ENCODE measurements at regions of chr6 and their contacts with region 1.

Region 1: DNA sequence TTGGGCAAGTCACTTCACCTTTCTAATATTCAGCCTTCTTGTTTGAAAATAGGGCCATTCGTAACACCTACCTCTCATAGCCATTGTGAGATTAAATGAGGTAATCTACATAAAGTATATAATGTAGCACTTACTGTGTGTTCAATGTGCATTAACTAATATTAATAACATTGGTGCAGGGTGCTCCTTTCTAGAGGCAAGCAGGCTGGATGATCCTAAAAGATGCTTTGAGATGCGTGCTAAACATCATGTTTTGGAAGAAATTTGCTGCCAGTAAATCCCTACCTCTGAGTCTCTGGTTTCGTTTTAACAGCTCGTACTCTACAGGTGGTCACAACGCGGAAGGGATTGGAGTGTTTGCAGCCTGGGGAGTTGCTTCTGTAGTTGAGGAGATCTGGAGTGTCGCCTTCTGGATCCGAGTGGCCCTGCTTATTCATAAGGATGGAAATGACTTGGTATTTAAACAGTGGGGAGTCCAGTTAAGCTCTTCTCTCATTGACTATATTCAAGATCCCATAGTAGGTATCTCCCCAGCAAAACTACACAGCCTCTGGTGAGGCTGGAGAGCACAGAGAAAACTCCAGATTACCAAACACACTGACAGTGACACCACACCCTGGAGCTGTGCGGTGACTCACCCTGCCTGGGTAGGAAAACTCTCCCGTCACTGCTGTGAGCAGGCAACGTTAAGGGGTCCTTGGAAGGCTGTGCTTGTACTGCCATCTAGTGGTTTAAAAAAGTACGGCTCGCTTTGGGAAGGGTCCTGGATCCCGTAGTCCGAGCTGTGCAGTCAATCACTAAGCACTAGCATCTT is 107.9 kb downstream of the MAP3K7 start:
- DNase-seq: peak; percentile 94
- H3K4me3 Mint-ChIP-seq: no peak overlapping the region
- H3K27ac Mint-ChIP-seq: peak overlapping the region; percentile 81
- H3K4me1 Mint-ChIP-seq: peaks cover 60% of the 10 kb centered on the region
- H3K27me3 Mint-ChIP-seq: no peaks in the 10 kb centered on the region

Region 2: DNA sequence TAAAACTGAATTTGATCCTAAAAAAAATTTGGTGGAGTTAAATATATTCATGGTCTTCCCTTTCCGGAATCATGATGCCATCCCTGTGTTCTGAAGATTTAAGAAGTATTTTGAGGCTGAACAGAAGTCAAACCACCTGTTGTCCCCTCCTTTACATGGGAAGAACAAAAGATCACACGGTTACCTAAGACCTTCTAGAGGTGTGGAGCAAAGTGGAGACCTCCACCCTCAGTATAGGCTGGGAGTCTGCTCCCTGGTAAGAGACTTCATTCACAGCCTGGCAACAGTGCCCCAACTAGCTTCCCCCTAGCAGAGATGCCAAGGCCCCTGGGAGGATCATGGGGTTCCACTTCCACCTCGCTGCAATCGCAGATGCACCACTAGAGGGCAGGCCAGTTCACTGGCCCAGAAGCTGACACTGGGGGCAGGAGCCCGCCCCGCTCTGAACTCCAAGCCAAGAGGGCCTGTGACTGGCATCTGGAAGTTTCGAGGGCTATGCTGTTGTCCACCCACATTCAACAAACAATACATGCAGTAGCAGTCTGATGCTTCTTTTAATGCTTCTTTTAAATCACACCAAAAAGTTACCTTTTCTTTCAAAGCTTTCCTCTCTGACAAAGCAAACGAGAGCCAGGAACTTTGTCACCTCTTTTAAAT is 1107.0 kb before region 1 on chr6:
- CTCF ChIA-PET with region 1: no interaction called
- intact Hi-C with region 1: loop called (anchors 1 kb)
- DNase-seq: peak; percentile 81
- H3K4me3 Mint-ChIP-seq: no peak overlapping the region
- H3K27ac Mint-ChIP-seq: no peak overlapping the region
- H3K4me1 Mint-ChIP-seq: peaks cover 15% of the 10 kb centered on the region
- H3K27me3 Mint-ChIP-seq: no peaks in the 10 kb centered on the region

Region 3: GRCh38 chr6:89819336-89820130 is 659.5 kb before region 1 on chr6 and contains the start of gene MDN1:
- CTCF ChIA-PET with region 1: no interaction called
- intact Hi-C with region 1: loop called (anchors 2 kb)
- DNase-seq: peak; percentile 94
- H3K4me3 Mint-ChIP-seq: peak within 1 kb of the TSS; percentile 82
- H3K27ac Mint-ChIP-seq: peak within 1 kb of the TSS; percentile 88
- H3K4me1 Mint-ChIP-seq: peaks cover 36% of the 10 kb centered on the region
- H3K27me3 Mint-ChIP-seq: no peaks in the 10 kb centered on the region
- total RNA-seq, gene MDN1: 42.1 to 52.1 TPM

Region 4: GRCh38 chr6:89940225-89941027 is 538.6 kb before region 1 on chr6:
- CTCF ChIA-PET with region 1: interaction called, 20 read pairs
- intact Hi-C with region 1: loop called (anchors 1 kb)
- DNase-seq: peak; percentile 86
- H3K4me3 Mint-ChIP-seq: no peak overlapping the region
- H3K27ac Mint-ChIP-seq: peak overlapping the region; percentile 74
- H3K4me1 Mint-ChIP-seq: peaks cover 70% of the 10 kb centered on the region
- H3K27me3 Mint-ChIP-seq: no peaks in the 10 kb centered on the region

Region 5: GRCh38 chr6:90216072-90216977 is 262.7 kb before region 1 on chr6:
- CTCF ChIA-PET with region 1: interaction called, 9 read pairs
- intact Hi-C with region 1: loop called (anchors 1 kb)
- DNase-seq: peak; percentile 76
- H3K4me3 Mint-ChIP-seq: peak overlapping the region; percentile 14
- H3K27ac Mint-ChIP-seq: no peak overlapping the region
- H3K4me1 Mint-ChIP-seq: peaks cover 32% of the 10 kb centered on the region
- H3K27me3 Mint-ChIP-seq: no peaks in the 10 kb centered on the region

Region 6: GRCh38 chr6:90425161-90425641 is 53.8 kb before region 1 on chr6:
- CTCF ChIA-PET with region 1: interaction called, 17 read pairs
- intact Hi-C with region 1: no loop called
- DNase-seq: peak; percentile 46
- H3K4me3 Mint-ChIP-seq: peak overlapping the region; percentile 48
- H3K27ac Mint-ChIP-seq: peak overlapping the region; percentile 92
- H3K4me1 Mint-ChIP-seq: peaks cover 41% of the 10 kb centered on the region
- H3K27me3 Mint-ChIP-seq: no peaks in the 10 kb centered on the region